ENCODE measurements at regions of chr20 and their contacts with region 1.

Region 1: DNA sequence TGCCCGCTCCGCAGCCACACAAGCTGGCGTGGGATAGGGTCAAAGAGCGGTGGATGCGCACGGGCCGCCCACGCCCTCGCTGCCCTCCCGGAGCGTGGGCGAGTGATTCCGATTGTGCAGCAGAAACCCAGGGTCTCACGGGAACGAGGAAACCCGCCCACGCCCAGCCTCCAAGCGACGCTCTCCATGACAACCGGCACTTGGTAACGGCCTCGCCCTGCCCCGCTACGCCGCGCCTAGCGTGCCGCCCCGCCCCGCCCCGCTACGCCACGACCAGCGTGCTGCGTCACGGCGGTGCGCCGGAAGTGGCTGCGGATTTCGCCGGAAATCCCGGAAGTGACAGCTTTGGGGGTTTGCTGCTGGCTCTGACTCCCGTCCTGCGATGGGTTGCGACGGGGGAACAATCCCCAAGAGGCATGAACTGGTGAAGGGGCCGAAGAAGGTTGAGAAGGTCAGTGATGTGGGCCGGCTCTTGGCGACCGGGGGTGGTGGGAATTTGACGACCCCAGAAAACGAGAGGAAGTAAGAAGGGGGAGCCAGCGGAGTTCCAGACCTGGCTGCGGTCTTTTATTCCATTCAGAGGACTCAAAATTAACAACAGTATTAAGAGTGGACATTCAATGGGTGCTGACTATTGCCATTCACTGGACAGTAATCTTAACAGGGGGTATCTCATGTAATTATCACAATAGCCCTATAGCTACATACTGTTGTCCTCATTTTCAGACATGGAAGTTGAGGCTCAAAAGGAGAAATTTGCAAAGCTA is at the start of gene RTF2:
- DNase-seq: peak; percentile 90 to 97 (median 94)
- H3K4me3 ChIP-seq: peak within 1 kb of the TSS; percentile 72
- H3K27ac ChIP-seq: peak within 1 kb of the TSS; percentile 33 to 61
- H3K4me1 ChIP-seq: peaks cover 7% of the 10 kb centered on the region
- H3K27me3 ChIP-seq: no peaks in the 10 kb centered on the region
- CTCF ChIP-seq: no peak
- EP300 ChIP-seq: peak; percentile 50
- POLR2A ChIP-seq: peak; percentile 71
- total RNA-seq, gene RTF2: 32.3 to 91.0 (median 85.2) TPM

Region 2: GRCh38 chr20:56392282-56393137 is 76.0 kb before region 1 on chr20 and contains the start of gene CSTF1:
- intact Hi-C with region 1: loop called in 1 of 4 experiments (anchors 10 kb)
- DNase-seq: peak; percentile 99 to 100 (median 99)
- H3K4me3 ChIP-seq: peak within 1 kb of the TSS; percentile 90
- H3K27ac ChIP-seq: peak within 1 kb of the TSS; percentile 31 to 72
- H3K4me1 ChIP-seq: peaks cover 8% of the 10 kb centered on the region
- H3K27me3 ChIP-seq: no peaks in the 10 kb centered on the region
- CTCF ChIP-seq: no peak
- EP300 ChIP-seq: peak; percentile 95
- POLR2A ChIP-seq: peak; percentile 48
- total RNA-seq, gene CSTF1: 23.8 to 41.5 (median 31.8) TPM

Region 3: GRCh38 chr20:56513161-56514150 is 45.0 kb after region 1 on chr20:
- intact Hi-C with region 1: no loop called
- DNase-seq: no peak
- H3K4me3 ChIP-seq: no peak overlapping the region
- H3K27ac ChIP-seq: no peak overlapping the region
- H3K4me1 ChIP-seq: no peaks in the 10 kb centered on the region
- H3K27me3 ChIP-seq: no peaks in the 10 kb centered on the region
- CTCF ChIP-seq: no peak
- EP300 ChIP-seq: no peak
- POLR2A ChIP-seq: no peak

Measured in ovary (tissue), 10 donors.